Transverse colon (tissue), 4 donors: ENCODE measurements at regions of chr14 and their contacts with region 1.

Region 1: GRCh38 chr14:22918804-22919600 is at the start of gene RBM23:
- DNase-seq: peak; percentile 100
- H3K4me3 ChIP-seq: peak within 1 kb of the TSS; percentile 73 to 90 (median 82)
- H3K27ac ChIP-seq: peak within 1 kb of the TSS; percentile 96 to 100 (median 97)
- H3K4me1 ChIP-seq: peaks cover 11 to 33% (median 23%) of the 10 kb centered on the region in 4 donors
- H3K27me3 ChIP-seq: no peaks in the 10 kb centered on the region
- CTCF ChIP-seq: no peak
- EP300 ChIP-seq: peak; percentile 17
- POLR2A ChIP-seq: peak; percentile 90
- total RNA-seq, gene RBM23: 96.4 to 186 (median 114) TPM

Region 2: GRCh38 chr14:22872033-22872832 is 46.8 kb before region 1 on chr14:
- in situ Hi-C with region 1: no loop called
- intact Hi-C with region 1: loop called (anchors 5 kb)
- DNase-seq: peak; percentile 92
- H3K4me3 ChIP-seq: peak overlapping the region; percentile 61 to 89 (median 74)
- H3K27ac ChIP-seq: peak overlapping the region; percentile 94 to 99 (median 98)
- H3K4me1 ChIP-seq: peaks cover 19 to 29% (median 23%) of the 10 kb centered on the region in 4 donors
- H3K27me3 ChIP-seq: no peaks in the 10 kb centered on the region
- CTCF ChIP-seq: peak; percentile 92 to 99 (median 97)
- EP300 ChIP-seq: no peak
- POLR2A ChIP-seq: peak; percentile 23